Activated T-helper 2 cell treated with anti-CD3 and anti-CD28 coated beads, Interferon-gamma antibody, Interleukin-2, Interleukin-4, amounts not matched to agents 10 μg/mL and 5 μg/mL and 100 μg/mL, durations not matched to agents 14 hours and 24 hours and 36 hours (primary cell): ENCODE measurements at regions of chr10 and their contacts with region 1.

Region 1: DNA sequence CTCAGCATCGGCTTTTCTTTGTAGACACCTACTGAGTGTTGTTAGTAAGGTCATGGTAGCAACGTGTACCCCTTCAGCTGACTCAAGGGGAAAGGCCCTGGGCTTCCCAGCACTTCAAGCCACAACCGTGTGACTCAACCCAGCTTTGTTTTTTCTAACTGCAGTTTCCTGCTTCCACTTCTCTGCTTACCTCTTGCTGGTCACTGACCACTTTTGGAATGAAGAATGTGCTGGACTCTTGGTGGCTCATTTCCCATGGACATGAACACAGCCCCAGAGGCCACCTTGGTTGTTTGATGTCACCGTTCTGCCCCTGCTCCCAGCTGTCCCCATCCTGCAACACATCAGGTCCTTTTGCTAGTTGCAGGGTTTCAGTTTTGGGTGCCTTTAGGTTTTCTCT is 69.5 kb upstream of the ZNF438 start:
- DNase-seq: peak; percentile 54
- H3K4me3 Mint-ChIP-seq: no peak overlapping the region
- H3K27ac Mint-ChIP-seq: peak overlapping the region; percentile 90
- H3K4me1 Mint-ChIP-seq: peaks cover 64% of the 10 kb centered on the region
- H3K27me3 Mint-ChIP-seq: no peaks in the 10 kb centered on the region

Region 2: GRCh38 chr10:31031558-31032257 is 69.4 kb before region 1 on chr10 and contains the start of gene ZNF438:
- intact Hi-C with region 1: loop called (anchors 5 kb)
- DNase-seq: peak; percentile 94
- H3K4me3 Mint-ChIP-seq: peak within 1 kb of the TSS; percentile 86
- H3K27ac Mint-ChIP-seq: peak within 1 kb of the TSS; percentile 98
- H3K4me1 Mint-ChIP-seq: peaks cover 27% of the 10 kb centered on the region
- H3K27me3 Mint-ChIP-seq: no peaks in the 10 kb centered on the region
- total RNA-seq, gene ZNF438: 5.8 and 6.1 TPM in 2 replicates

Region 3: GRCh38 chr10:31090894-31091607 is 10.1 kb before region 1 on chr10:
- intact Hi-C with region 1: loop called (anchors 1 kb)
- DNase-seq: peak; percentile 46
- H3K4me3 Mint-ChIP-seq: no peak overlapping the region
- H3K27ac Mint-ChIP-seq: peak overlapping the region; percentile 82
- H3K4me1 Mint-ChIP-seq: peaks cover 31% of the 10 kb centered on the region
- H3K27me3 Mint-ChIP-seq: no peaks in the 10 kb centered on the region

Region 4: GRCh38 chr10:31118556-31118955 is 17.4 kb after region 1 on chr10:
- intact Hi-C with region 1: no loop called
- DNase-seq: no peak
- H3K4me3 Mint-ChIP-seq: no peak overlapping the region
- H3K27ac Mint-ChIP-seq: no peak overlapping the region
- H3K4me1 Mint-ChIP-seq: peaks cover 12% of the 10 kb centered on the region
- H3K27me3 Mint-ChIP-seq: no peaks in the 10 kb centered on the region

Region 5: GRCh38 chr10:31146491-31147209 is 45.5 kb after region 1 on chr10:
- intact Hi-C with region 1: loop called (anchors 1 kb)
- DNase-seq: no peak
- H3K4me3 Mint-ChIP-seq: peak overlapping the region; percentile 66
- H3K27ac Mint-ChIP-seq: peak overlapping the region; percentile 81
- H3K4me1 Mint-ChIP-seq: peaks cover 48% of the 10 kb centered on the region
- H3K27me3 Mint-ChIP-seq: no peaks in the 10 kb centered on the region

Region 6: GRCh38 chr10:31219306-31219705 is 118.2 kb after region 1 on chr10:
- intact Hi-C with region 1: no loop called
- DNase-seq: no peak
- H3K4me3 Mint-ChIP-seq: no peak overlapping the region
- H3K27ac Mint-ChIP-seq: no peak overlapping the region
- H3K4me1 Mint-ChIP-seq: no peaks in the 10 kb centered on the region
- H3K27me3 Mint-ChIP-seq: peaks cover 9% of the 10 kb centered on the region

Region 7: DNA sequence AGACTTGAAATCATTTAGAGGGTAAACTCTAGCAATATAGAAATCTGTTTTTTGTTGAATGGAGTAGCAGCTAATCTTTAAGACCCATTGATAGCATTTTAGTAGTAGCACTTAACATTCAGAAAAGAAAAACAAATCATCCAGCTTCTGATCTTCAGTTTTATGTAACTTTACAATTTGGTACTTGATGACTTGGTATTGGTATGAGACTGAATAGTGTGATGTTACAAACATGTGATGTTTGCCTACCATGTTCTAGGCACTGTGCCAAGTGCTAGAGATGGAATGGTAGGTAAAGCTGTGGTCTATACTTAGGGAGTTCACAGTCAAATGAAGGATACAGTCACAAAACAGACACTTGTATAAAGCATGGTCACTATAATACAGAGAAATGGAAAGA is 239.2 kb after region 1 on chr10:
- intact Hi-C with region 1: loop called (anchors 1 kb)
- DNase-seq: no peak
- H3K4me3 Mint-ChIP-seq: no peak overlapping the region
- H3K27ac Mint-ChIP-seq: no peak overlapping the region
- H3K4me1 Mint-ChIP-seq: peaks cover 23% of the 10 kb centered on the region
- H3K27me3 Mint-ChIP-seq: no peaks in the 10 kb centered on the region